AG04449 (cell line): ENCODE measurements at regions of chr17 and their contacts with region 1.

Region 1: GRCh38 chr17:82212331-82213250 is at the start of gene CCDC57:
- DNase-seq: no peak
- H3K4me3 ChIP-seq: peak within 1 kb of the TSS; percentile 71
- CTCF ChIP-seq: no peak

Region 2: GRCh38 chr17:82193520-82194220 is 18.9 kb before region 1 on chr17:
- CTCF ChIA-PET with region 1: no interaction called
- POLR2A ChIA-PET with region 1: no interaction called
- DNase-seq: no peak
- H3K4me3 ChIP-seq: no peak overlapping the region
- CTCF ChIP-seq: no peak

Region 3: GRCh38 chr17:82230627-82231311 is 18.2 kb after region 1 on chr17:
- CTCF ChIA-PET with region 1: interaction called, 8 read pairs
- POLR2A ChIA-PET with region 1: interaction called, 101 read pairs
- DNase-seq: no peak
- H3K4me3 ChIP-seq: peak overlapping the region; percentile 86
- CTCF ChIP-seq: peak; percentile 60

Region 4: DNA sequence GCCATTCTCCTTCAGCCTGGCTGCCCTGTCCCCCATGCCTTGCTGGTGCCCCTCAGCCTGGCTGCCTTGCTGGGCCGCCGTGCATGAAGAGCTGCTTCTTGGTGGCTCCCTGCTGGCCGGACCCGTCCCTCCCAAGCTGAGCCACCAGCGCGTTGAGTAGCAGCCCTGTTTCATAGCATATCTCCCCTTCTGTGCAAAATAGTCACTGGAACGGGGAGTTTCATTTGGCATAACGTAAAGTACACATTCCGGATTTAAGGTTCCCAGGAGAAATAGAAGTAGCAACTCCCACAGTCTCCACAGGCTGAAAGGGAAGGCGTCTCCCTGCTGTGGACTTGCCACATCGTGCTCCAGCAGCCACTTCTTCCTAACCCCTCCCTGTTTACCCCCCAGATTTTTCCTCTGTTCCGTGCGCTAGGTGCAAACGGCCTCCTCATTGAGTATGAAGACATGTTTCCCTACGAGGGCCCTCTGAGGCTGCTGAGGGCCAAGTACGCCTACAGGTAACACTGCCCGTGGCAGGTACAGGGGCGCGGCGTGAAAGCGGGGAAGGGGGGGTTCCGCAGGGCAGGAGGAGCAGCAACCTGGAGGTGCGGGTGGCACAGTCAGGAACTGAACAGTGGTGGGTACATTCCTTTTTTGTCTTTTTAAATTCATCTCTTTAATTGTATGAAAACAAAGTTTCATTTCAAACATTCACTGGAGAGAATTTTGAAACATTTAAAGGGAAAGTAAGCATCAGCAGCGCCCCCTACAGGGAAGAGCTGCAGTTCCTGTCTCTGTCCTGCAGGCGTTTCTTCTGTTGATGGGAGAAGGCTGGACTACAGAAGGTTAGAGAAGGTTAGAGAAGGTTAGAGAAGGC is 211.6 kb after region 1 on chr17:
- CTCF ChIA-PET with region 1: no interaction called
- POLR2A ChIA-PET with region 1: no interaction called
- DNase-seq: no peak
- H3K4me3 ChIP-seq: no peak overlapping the region
- CTCF ChIP-seq: peak; percentile 59